ENCODE measurements at regions of chr18 and their contacts with region 1.

Region 1: DNA sequence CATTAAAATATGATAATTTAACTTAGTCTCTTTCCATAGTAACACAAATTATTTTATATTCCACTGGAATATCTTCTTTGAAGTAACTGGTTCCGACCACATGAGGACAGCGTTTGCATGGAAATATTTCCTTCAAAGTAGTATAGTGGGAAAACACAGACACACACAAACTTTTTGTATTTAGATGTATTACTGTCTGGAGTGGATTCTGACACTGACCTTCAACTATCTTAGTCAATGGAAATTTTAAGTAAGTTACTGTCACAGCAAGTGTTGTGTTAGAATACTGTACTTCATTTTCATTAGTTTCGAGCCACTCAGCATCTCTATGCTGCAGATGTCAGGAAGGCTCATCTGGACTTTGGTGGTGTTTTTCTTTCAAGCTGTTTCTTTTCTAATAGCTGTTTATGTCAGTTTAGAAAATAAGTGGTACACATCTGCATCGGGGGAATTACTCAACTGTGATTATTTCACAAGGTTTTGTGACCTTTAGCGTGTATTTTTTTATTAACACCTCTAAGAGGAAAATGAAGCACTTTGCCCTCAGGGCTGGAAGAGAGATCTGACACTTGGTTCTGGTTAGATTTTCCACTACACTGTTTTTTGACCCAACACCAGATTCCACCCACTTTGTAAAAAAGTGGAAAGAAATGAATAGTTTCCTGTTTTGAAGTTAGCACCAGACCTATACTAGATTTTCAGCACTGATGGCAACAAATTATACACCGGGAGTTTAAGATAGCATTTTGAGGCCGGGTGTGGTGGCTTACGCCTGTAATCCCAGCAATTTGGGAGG is 18.9 kb upstream of the THOC1 start:
- DNase-seq: no peak
- H3K4me3 Mint-ChIP-seq: no peak overlapping the region
- H3K27ac Mint-ChIP-seq: no peak overlapping the region
- H3K4me1 Mint-ChIP-seq: no peaks in the 10 kb centered on the region
- H3K27me3 Mint-ChIP-seq: peaks cover 40% of the 10 kb centered on the region
- CTCF ChIP-seq: no peak

Region 2: DNA sequence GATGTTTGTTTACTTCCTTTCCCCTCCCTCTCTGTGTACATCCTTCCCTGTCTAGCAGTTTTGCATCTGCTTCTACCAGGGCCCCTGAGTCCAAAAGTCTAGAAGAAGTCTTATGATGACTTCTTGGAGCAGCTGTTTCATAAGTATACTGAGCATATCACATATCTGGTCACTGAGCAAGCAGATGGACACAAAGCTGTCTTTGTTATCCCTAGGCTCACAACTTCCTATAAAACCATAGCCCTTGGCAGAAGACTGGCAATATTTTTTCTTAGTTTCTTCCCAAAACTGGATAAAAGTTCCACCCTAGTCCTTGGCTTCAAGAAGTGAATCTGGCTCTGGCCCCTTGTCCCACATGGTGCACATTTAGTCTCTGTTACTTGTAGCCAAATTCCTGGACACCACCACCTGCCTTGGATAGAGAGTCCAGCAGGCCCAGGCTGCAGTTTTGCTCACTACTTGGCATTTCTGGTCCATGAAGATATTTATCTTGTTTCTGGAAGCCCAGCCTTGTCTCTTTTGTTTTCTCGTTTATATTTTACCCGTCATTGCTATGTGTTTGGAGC is 41.3 kb before region 1 on chr18:
- CTCF ChIA-PET with region 1: no interaction called
- intact Hi-C with region 1: no loop called
- DNase-seq: no peak
- H3K4me3 Mint-ChIP-seq: no peak overlapping the region
- H3K27ac Mint-ChIP-seq: no peak overlapping the region
- H3K4me1 Mint-ChIP-seq: no peaks in the 10 kb centered on the region
- H3K27me3 Mint-ChIP-seq: no peaks in the 10 kb centered on the region
- CTCF ChIP-seq: no peak

Region 3: GRCh38 chr18:477565-477964 is 190.9 kb after region 1 on chr18:
- CTCF ChIA-PET with region 1: no interaction called
- intact Hi-C with region 1: loop called (anchors 5 kb)
- DNase-seq: peak; percentile 66
- H3K4me3 Mint-ChIP-seq: no peak overlapping the region
- H3K27ac Mint-ChIP-seq: no peak overlapping the region
- H3K4me1 Mint-ChIP-seq: peaks cover 20% of the 10 kb centered on the region
- H3K27me3 Mint-ChIP-seq: peaks cover 17% of the 10 kb centered on the region
- CTCF ChIP-seq: peak; percentile 68

Region 4: GRCh38 chr18:616380-616995 is 329.8 kb after region 1 on chr18:
- CTCF ChIA-PET with region 1: no interaction called
- intact Hi-C with region 1: loop called (anchors 1 kb)
- DNase-seq: peak; percentile 21
- H3K4me3 Mint-ChIP-seq: no peak overlapping the region
- H3K27ac Mint-ChIP-seq: no peak overlapping the region
- H3K4me1 Mint-ChIP-seq: no peaks in the 10 kb centered on the region
- H3K27me3 Mint-ChIP-seq: peaks cover 13% of the 10 kb centered on the region
- CTCF ChIP-seq: no peak

Region 5: DNA sequence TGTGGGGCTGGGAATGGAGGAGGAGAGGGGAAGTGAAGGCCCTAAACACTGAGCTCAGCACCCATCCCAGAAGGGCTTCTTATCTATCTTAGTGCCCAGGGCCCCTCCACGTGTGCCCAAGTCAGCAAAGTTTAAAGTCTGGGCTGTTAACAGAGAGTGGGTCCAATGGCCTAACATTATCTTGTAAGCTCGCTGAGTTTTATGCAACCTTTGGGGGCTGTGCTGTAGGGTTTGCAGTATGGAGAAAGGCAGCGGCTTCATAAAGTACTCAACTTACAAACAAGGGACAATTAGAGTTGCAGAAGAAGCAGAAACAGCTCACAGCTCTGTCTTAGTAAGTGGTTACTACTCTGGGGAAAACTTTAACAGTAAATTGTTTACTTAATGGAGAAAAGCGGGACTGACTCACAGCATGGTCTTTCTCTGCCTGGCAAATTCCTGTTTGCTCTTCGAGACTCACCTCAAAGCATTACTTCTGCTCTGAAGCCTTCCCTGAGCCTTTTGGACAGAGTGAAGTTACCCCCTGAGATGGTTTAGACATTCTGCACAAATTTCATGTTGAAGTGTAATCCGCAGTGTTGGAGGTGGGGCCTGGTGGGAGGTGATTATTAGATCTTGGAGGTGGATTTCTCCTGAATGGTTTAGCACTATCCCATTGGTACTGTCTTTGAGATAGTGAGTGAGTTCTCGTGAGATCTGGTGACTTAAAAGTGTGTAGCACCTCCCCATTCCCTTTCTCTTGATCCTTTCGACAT is 416.7 kb after region 1 on chr18:
- CTCF ChIA-PET with region 1: no interaction called
- intact Hi-C with region 1: loop called (anchors 5 kb)
- DNase-seq: no peak
- H3K4me3 Mint-ChIP-seq: peak overlapping the region; percentile 37
- H3K27ac Mint-ChIP-seq: peak overlapping the region; percentile 68
- H3K4me1 Mint-ChIP-seq: peaks cover 28% of the 10 kb centered on the region
- H3K27me3 Mint-ChIP-seq: no peaks in the 10 kb centered on the region
- CTCF ChIP-seq: no peak

Measured in Calu3 (cell line).